ENCODE measurements at regions of chr1 and their contacts with region 1.

Region 1: DNA sequence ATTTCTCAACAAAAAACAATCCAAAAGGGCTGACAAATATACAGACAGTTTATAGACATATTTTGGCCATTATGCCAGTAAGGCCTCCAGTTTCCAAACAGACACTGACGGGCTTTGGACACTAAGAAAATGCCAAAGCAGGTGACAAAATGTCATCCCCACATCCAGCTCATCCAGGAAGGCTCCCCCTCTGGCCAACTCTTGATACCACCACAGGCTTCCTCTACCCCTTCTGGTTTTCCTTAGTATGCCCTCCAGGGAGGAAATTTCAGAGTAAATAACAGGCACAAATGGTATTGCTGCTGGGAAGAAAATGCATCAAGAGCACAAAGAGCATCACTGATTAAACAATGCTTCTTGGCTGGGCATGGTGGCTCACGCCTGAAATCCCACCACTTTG is 225.3 kb downstream of the VAV3 start:
- DNase-seq: no peak
- H3K4me3 ChIP-seq: no peak overlapping the region
- H3K27ac ChIP-seq: no peak overlapping the region
- H3K4me1 ChIP-seq: peaks cover 0 to 39% (median 18%) of the 10 kb centered on the region in 4 donors
- H3K27me3 ChIP-seq: no peaks in the 10 kb centered on the region
- CTCF ChIP-seq: no peak
- EP300 ChIP-seq: no peak
- POLR2A ChIP-seq: no peak

Region 2: GRCh38 chr1:107622966-107623365 is 116.7 kb before region 1 on chr1:
- intact Hi-C with region 1: no loop called
- DNase-seq: no peak
- H3K4me3 ChIP-seq: no peak overlapping the region
- H3K27ac ChIP-seq: peak overlapping the region in 1 of 4 donors; percentile 15
- H3K4me1 ChIP-seq: peaks cover 0 to 21% (median 12%) of the 10 kb centered on the region in 4 donors
- H3K27me3 ChIP-seq: no peaks in the 10 kb centered on the region
- CTCF ChIP-seq: no peak
- EP300 ChIP-seq: no peak
- POLR2A ChIP-seq: no peak

Region 3: GRCh38 chr1:107669996-107670395 is 69.7 kb before region 1 on chr1:
- intact Hi-C with region 1: loop called (anchors 5 kb)
- DNase-seq: peak; percentile 95
- H3K4me3 ChIP-seq: no peak overlapping the region
- H3K27ac ChIP-seq: peak overlapping the region; percentile 56 to 70 (median 66)
- H3K4me1 ChIP-seq: peaks cover 0 to 41% (median 22%) of the 10 kb centered on the region in 4 donors
- H3K27me3 ChIP-seq: no peaks in the 10 kb centered on the region
- CTCF ChIP-seq: no peak
- EP300 ChIP-seq: no peak
- POLR2A ChIP-seq: no peak

Measured in sigmoid colon (tissue), 7 donors.